OCI-LY7 (cell line): ENCODE measurements at regions of chrX and their contacts with region 1.

Region 1: DNA sequence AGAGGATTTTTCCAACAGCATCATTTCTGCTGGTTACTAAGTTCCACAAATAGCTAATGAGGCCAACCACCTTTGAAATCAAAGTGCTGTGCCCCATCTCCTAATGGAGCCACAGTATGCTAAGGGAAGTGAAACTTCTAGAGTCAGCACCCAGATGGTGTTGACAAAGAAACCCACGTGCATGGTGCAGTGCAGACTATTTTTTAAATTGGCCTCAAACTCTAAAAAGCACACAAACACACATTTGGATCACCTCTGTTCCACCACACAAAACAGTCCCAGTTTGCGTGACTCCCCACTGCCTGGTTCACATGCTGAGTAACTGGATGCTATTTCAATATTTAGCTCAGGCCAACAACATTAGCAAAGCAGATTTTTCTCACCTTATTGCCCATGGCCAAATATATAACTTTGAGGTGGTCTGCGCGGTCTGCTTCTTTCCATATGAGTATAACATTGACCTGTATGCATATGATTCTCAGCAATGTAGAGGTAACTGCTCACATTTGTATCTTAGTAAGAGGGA is 69.9 kb downstream of the AMELX start:
- DNase-seq: peak; percentile 93
- H3K4me3 ChIP-seq: peak overlapping the region; percentile 16
- H3K27ac ChIP-seq: peak overlapping the region; percentile 98
- H3K4me1 ChIP-seq: peaks cover 36% of the 10 kb centered on the region
- CTCF ChIP-seq: no peak

Region 2: DNA sequence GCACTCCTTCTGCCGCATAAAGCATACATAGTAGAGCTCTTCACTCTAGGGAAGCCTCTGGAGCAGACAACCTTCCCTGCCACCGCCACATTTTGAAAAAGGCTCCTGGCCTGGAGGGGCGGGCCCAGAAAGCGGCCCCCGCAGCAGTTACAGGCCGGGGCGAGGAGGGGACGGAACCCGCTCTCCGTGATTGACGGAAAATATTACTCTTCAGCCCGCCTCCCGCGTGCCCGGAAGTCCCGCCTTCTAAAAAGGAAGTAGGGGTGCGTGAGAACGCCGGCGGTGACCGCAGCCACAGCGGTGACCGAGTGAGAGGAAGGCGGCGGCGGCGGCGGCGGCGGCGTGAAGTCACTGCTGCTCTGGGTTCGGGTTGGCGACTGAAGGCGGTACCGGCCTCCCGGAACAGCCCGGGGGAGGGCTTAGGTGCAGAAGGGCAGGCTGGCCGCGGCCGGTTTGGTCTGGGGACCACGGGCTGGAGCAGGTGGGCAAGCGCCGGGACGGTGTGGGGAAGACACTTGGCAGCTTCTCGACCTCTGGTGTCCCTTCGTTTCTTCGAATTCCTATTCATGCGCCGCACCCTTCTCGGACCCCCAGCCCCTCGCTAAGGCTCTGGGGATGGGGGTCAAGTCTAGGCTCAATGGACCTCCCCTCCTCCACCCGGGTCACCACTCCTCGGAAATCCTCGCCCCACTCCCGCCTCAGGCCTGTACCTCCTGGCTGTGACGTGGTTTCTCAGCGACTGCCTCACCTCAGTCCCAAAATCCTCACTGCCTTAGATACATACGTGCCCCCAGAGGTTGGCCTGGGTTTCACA is 251.9 kb before region 1 on chrX and contains the start of gene HCCS:
- CTCF ChIA-PET with region 1: interaction called, 3 read pairs
- POLR2A ChIA-PET with region 1: no interaction called
- intact Hi-C with region 1: loop called (anchors 10 kb)
- DNase-seq: peak; percentile 85
- H3K4me3 ChIP-seq: peak within 1 kb of the TSS; percentile 95
- H3K27ac ChIP-seq: peak within 1 kb of the TSS; percentile 62
- H3K4me1 ChIP-seq: peaks cover 26% of the 10 kb centered on the region
- CTCF ChIP-seq: peak; percentile 39; the same call in 1 of the 2 replicates
- total RNA-seq, gene HCCS: 11.1 and 16.1 TPM in 2 replicates

Region 3: DNA sequence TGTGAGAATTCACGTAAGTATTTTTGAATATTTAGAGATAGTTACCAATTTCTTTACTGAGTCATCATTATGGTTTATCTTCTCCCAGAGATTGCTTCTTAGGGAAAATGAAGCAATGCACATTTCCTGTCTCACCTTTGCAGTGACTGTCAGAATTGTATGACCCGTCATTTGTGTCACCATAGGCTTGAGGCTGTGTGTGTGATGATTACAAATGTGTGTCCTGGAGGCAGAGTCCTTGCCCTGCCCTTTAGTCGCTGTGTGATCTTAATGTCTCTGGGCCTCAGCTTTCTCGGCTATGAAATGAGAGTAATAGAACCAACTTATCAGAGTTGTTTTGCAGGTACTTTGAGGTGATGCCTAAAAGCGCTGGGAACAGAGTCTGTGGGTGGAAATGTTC is 238.1 kb before region 1 on chrX:
- CTCF ChIA-PET with region 1: no interaction called
- POLR2A ChIA-PET with region 1: no interaction called
- intact Hi-C with region 1: no loop called
- DNase-seq: no peak
- H3K4me3 ChIP-seq: no peak overlapping the region
- H3K27ac ChIP-seq: no peak overlapping the region
- H3K4me1 ChIP-seq: no peaks in the 10 kb centered on the region
- CTCF ChIP-seq: no peak

Region 4: GRCh38 chrX:11437642-11438379 is 74.7 kb after region 1 on chrX:
- CTCF ChIA-PET with region 1: no interaction called
- POLR2A ChIA-PET with region 1: no interaction called
- intact Hi-C with region 1: no loop called
- DNase-seq: peak; percentile 8
- H3K4me3 ChIP-seq: no peak overlapping the region
- H3K27ac ChIP-seq: no peak overlapping the region
- H3K4me1 ChIP-seq: no peaks in the 10 kb centered on the region
- CTCF ChIP-seq: no peak

Region 5: GRCh38 chrX:11758400-11759171 is 395.5 kb after region 1 on chrX:
- CTCF ChIA-PET with region 1: no interaction called
- POLR2A ChIA-PET with region 1: no interaction called
- intact Hi-C with region 1: loop called (anchors 5 kb)
- DNase-seq: peak; percentile 85
- H3K4me3 ChIP-seq: peak overlapping the region; percentile 95
- H3K27ac ChIP-seq: peak overlapping the region; percentile 99
- H3K4me1 ChIP-seq: peaks cover 20% of the 10 kb centered on the region
- CTCF ChIP-seq: peak; percentile 68